MCF 10A (cell line): ENCODE measurements at regions of chr14 and their contacts with region 1.

Region 1: DNA sequence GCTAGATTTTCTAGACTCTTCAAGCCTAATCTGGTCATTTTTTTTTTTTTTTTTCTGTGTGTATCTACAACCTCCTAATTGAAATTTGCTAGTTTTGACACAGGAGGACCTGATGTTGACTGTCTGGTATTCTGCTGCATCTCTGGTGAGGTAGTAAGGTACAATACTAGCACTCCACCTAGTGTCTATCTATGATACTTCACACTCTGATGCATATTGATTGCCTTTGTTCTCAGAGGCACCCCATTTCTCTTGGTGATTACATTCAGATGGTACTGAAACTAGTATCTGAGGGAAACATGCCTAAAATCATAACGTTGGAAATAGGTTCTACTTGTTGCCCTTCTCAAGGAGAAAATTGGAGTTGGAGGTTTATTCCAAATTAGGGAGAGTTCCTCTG is 930.5 kb upstream of the NOVA1 start:
- DNase-seq: peak; percentile 57
- H3K4me3 Mint-ChIP-seq: no peak overlapping the region
- H3K27ac Mint-ChIP-seq: no peak overlapping the region
- H3K4me1 Mint-ChIP-seq: no peaks in the 10 kb centered on the region
- H3K27me3 Mint-ChIP-seq: peaks cover 9% of the 10 kb centered on the region
- CTCF ChIP-seq: peak; percentile 66

Region 2: GRCh38 chr14:26394150-26394810 is 1134.0 kb before region 1 on chr14:
- CTCF ChIA-PET with region 1: no interaction called
- POLR2A ChIA-PET with region 1: no interaction called
- intact Hi-C with region 1: loop called (anchors 1 kb)
- DNase-seq: peak; percentile 1
- H3K4me3 Mint-ChIP-seq: no peak overlapping the region
- H3K27ac Mint-ChIP-seq: no peak overlapping the region
- H3K4me1 Mint-ChIP-seq: peaks cover 8% of the 10 kb centered on the region
- H3K27me3 Mint-ChIP-seq: peaks cover 11% of the 10 kb centered on the region
- CTCF ChIP-seq: peak; percentile 19

Region 3: DNA sequence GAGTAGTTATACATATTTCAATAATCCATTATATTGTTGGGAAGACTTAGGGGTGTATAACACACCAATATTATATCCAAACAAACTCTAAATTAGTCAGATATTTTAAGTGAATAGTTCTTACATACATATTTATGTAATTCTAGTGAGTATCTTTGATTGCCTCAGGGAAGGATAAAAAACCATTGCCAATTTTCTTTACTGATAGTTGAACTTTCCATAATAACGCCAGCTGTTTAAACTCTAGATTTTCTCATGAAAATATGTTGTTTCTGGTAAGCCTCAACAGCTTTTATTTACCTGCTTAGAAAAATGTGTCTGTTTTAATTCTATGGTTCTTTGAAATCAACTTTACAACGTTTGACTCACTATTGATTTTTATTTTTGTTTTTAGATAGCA is 29.1 kb after region 1 on chr14:
- CTCF ChIA-PET with region 1: interaction called, 5 read pairs
- POLR2A ChIA-PET with region 1: no interaction called
- intact Hi-C with region 1: loop called (anchors 2 kb)
- DNase-seq: no peak
- H3K4me3 Mint-ChIP-seq: no peak overlapping the region
- H3K27ac Mint-ChIP-seq: no peak overlapping the region
- H3K4me1 Mint-ChIP-seq: no peaks in the 10 kb centered on the region
- H3K27me3 Mint-ChIP-seq: no peaks in the 10 kb centered on the region
- CTCF ChIP-seq: no peak

Region 4: DNA sequence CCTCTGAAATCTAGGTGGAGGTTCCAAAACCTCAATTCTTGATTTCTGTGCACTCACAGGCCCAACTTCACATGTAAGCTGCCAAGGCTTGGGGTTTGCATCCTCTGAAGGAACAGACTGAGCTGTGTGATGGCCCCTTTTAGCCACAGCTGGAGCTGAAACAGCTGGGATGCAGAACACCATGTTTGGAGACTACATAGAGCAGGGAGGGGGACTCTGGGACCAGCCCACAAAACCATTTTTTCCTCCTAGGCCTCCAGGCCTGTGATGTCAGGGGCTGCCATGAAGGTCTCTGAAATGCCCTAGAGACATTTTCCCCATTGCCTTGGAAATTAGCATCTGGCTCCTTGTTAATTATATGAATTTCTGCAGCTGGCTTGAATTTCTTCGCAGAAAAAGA is 95.5 kb after region 1 on chr14:
- CTCF ChIA-PET with region 1: no interaction called
- POLR2A ChIA-PET with region 1: no interaction called
- intact Hi-C with region 1: no loop called
- DNase-seq: no peak
- H3K4me3 Mint-ChIP-seq: no peak overlapping the region
- H3K27ac Mint-ChIP-seq: no peak overlapping the region
- H3K4me1 Mint-ChIP-seq: no peaks in the 10 kb centered on the region
- H3K27me3 Mint-ChIP-seq: no peaks in the 10 kb centered on the region
- CTCF ChIP-seq: no peak

Region 5: GRCh38 chr14:27727251-27727770 is 199.0 kb after region 1 on chr14:
- CTCF ChIA-PET with region 1: no interaction called
- POLR2A ChIA-PET with region 1: no interaction called
- intact Hi-C with region 1: no loop called
- DNase-seq: no peak
- H3K4me3 Mint-ChIP-seq: no peak overlapping the region
- H3K27ac Mint-ChIP-seq: no peak overlapping the region
- H3K4me1 Mint-ChIP-seq: no peaks in the 10 kb centered on the region
- H3K27me3 Mint-ChIP-seq: peaks cover 42% of the 10 kb centered on the region
- CTCF ChIP-seq: no peak

Region 6: DNA sequence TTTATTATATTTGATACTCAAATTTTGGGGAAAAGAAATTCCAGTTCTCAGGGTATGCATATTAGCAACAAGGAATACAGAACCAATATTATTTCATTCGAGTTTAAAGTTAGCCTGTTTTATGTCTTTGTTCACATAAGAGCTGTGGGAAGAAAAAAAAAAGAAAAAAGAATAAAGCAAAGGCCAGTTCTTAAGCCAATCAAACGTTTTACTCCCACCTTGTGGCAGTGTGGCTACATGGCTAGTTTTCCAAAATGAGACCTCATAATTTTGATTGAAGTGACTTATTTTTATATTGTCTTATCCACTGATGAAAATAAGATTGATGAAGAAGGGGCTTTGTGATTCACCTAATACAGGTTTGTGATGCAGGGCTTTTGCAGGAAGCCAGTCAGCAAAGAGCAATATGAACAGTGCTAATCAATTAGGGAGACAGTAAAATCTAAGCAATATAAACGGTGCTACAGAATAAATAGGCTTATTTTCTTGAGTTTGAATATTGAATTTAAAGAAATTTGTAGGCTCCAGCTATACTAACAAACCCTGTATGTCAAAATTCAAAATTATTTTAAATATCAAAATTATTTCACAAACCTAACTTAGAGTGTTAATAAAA is 614.2 kb after region 1 on chr14:
- CTCF ChIA-PET with region 1: no interaction called
- POLR2A ChIA-PET with region 1: no interaction called
- intact Hi-C with region 1: loop called (anchors 2 kb)
- DNase-seq: peak; percentile 44
- H3K4me3 Mint-ChIP-seq: no peak overlapping the region
- H3K27ac Mint-ChIP-seq: no peak overlapping the region
- H3K4me1 Mint-ChIP-seq: no peaks in the 10 kb centered on the region
- H3K27me3 Mint-ChIP-seq: no peaks in the 10 kb centered on the region
- CTCF ChIP-seq: peak; percentile 48